ENCODE measurements at regions of chr15 and their contacts with region 1.

Region 1: GRCh38 chr15:32790352-32790999 is 72.7 kb downstream of the GREM1 start:
- DNase-seq: no peak
- ATAC-seq: no peak
- H3K4me3 ChIP-seq: no peak overlapping the region
- H3K27ac ChIP-seq: no peak overlapping the region
- H3K4me1 ChIP-seq: no peaks in the 10 kb centered on the region
- H3K27me3 ChIP-seq: no peaks in the 10 kb centered on the region
- CTCF ChIP-seq: no peak
- POLR2A ChIP-seq: no peak

Region 2: DNA sequence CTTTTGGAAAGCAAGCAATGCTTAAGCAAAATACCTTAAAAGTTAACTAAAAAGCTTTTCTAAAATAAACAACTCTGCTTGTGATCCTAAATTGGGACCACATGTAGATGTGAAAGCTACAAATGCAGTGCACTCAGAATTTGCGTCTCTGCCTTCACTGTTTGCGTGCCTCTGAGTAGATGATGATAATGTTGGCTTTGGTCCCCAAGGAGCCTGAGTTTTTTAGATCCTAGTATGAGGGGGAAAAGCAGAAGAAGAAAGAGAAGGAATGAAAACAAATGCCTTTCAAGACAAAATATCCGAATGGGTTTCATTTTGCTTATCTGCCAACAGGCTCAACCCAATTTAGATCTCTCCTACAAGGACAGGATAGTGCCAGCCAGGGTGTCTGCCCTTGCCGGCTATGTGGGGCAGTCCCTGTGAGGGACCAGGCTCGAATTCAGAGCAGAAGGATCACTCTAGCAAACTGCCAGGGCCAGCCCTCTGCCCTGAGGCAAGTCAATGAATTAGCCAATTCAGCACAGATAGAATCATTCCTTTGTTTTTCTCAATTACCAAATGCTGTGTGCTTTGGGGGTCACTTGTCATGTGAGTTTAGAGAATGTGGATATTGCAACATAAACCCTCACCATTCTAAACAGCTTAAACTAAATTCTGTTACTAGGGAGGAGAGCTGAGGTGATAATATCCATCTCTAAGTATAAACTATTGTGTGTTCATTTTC is 120.4 kb before region 1 on chr15:
- intact Hi-C with region 1: loop called in 1 of 10 experiments (anchors 10 kb)
- DNase-seq: peak in 1 of 5 donors; percentile 29
- ATAC-seq: peak in 3 of 4 donors; percentile 42 to 72 (median 62)
- H3K4me3 ChIP-seq: no peak overlapping the region
- H3K27ac ChIP-seq: no peak overlapping the region
- H3K4me1 ChIP-seq: no peaks in the 10 kb centered on the region
- H3K27me3 ChIP-seq: no peaks in the 10 kb centered on the region
- CTCF ChIP-seq: no peak
- POLR2A ChIP-seq: no peak

Region 3: DNA sequence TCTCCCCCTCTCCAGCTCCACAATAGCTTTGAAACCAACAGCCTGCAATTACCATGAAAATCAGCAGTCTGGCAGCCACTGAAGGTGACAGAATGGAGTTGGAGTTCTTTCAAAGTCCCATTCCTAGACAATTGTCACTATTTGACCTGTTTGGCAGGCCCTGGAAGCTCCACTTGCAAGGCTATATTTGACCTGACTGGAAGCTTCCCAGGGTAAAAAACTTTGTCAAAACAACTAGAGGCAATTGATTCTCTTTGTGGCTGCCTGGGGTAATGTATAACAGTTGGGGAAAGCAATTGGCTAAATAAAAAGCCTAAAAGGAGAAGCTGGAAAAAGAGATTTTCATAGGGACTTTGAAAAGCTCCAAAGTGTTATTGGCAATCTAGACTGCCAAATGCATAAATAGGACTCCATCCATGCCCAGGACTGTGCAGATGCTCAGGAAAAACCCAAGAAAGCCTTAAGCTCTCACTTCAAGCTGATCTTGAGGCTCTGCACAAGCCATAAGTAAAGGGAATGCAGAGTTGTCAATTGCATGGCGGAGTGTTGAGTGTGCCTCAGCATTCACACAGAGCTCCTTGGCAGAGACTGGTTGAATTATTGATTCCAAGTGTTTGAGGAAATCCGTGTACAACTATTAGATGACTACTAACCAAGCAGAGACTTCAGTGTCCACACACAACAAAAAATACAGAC is 54.3 kb before region 1 on chr15:
- intact Hi-C with region 1: loop called in 1 of 10 experiments (anchors 5 kb)
- DNase-seq: no peak
- ATAC-seq: no peak
- H3K4me3 ChIP-seq: no peak overlapping the region
- H3K27ac ChIP-seq: no peak overlapping the region
- H3K4me1 ChIP-seq: no peaks in the 10 kb centered on the region
- H3K27me3 ChIP-seq: peaks cover 0 to 15% (median 0%) of the 10 kb centered on the region in 9 donors
- CTCF ChIP-seq: no peak
- POLR2A ChIP-seq: no peak